Left cardiac atrium (tissue), 4 donors: ENCODE measurements at regions of chr4 and their contacts with region 1.

Region 1: DNA sequence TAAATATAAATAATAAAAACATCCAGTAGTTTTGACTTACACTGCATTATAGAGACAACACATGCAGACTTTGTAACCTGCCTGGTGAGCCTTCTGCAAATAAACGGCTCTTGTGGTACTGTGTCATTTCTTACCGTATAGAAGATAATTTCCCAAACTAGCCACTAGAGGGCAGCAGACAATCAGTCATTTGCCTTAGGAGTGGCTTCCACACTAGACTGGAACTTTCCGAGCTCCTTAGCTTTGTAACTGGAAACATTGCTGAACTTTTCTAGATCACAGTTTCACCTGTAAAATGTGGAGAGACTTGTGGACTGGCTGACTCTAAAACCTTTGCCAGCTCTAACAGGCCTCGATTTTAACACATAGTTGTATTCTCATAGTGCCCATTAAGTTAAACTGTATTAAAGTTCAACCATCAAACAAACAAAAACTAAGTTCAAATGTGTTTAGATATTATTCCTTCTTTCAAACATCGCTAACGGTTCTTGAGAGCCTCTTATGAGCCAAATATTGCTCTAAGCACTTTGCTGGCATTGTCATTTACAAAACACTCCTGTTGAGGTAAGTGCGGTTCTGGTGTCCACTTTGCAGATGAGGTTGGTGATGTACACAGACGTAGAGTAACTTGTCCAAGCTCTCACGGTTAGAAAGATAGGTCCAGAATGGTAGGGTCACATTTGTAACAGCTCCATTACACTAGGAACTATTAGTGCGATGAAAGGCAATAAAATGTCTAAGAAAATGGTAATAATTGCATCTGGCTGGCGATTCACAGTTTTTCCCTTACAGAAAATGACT is 345.5 kb downstream of the ANK2 start:
- DNase-seq: no peak
- ATAC-seq: peak; percentile 95

Region 2: DNA sequence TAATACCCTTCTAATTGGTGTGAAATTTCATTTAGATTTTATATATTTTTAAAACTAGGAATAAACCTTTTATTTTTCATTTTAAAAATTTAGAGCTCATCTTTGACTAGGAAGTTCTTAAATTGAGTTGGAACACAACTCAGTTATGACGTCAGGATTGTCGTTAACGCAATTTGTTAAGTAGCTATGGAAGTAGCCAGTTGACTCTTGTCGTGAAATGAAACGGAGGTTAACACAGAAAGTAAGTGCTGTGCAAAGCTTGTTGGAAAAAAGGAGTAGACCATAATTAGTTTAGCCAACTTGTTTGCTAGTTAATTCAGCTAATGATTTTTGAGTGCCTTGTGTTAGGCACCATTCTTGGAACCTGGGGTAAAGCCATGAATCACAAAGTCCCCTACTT is 739.7 kb before region 1 on chr4:
- intact Hi-C with region 1: no loop called
- DNase-seq: no peak
- ATAC-seq: no peak

Region 3: DNA sequence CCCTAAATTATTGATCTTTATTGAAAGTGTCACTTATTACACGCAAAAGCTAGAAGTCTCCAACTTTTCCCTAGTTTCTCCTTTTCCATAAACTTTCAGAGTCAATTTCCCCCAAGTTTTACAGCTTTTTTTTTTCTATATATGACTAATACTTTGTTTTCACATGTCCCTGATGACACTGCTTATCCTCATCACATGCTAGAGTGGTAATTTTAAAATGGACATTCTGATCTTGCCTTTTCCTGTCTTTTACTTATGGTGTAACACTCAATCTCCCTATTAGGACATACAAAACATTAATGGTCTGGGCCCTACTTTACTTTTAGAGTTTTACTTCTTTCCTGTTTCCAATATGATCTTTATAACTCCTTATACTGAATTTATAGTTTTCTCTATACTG is 232.8 kb before region 1 on chr4:
- intact Hi-C with region 1: no loop called
- DNase-seq: no peak
- ATAC-seq: peak in 1 of 2 donors; percentile 40

Region 4: GRCh38 chr4:113623274-113623894 is 228.5 kb after region 1 on chr4:
- intact Hi-C with region 1: no loop called
- DNase-seq: no peak
- ATAC-seq: no peak

Region 5: GRCh38 chr4:113761620-113762185 is 366.8 kb after region 1 on chr4 and contains the start of gene CAMK2D:
- intact Hi-C with region 1: loop called (anchors 5 to 10 kb)
- DNase-seq: peak; percentile 82
- ATAC-seq: peak; percentile 75 to 83
- total RNA-seq, gene CAMK2D: 133 to 136 TPM

Region 6: GRCh38 chr4:113766882-113767281 is 372.0 kb after region 1 on chr4:
- intact Hi-C with region 1: loop called (anchors 5 to 10 kb)
- DNase-seq: no peak
- ATAC-seq: no peak

Region 7: GRCh38 chr4:113881256-113881655 is 486.3 kb after region 1 on chr4:
- intact Hi-C with region 1: loop called in 1 of 2 experiments (anchors 10 kb)
- DNase-seq: no peak
- ATAC-seq: peak in 1 of 2 donors; percentile 76

Region 8: GRCh38 chr4:113901994-113902787 is 507.3 kb after region 1 on chr4:
- intact Hi-C with region 1: loop called in 1 of 2 experiments (anchors 10 kb)
- DNase-seq: no peak
- ATAC-seq: peak; percentile 22 to 63

Region 9: GRCh38 chr4:114386637-114387233 is 991.8 kb after region 1 on chr4:
- intact Hi-C with region 1: loop called in 1 of 2 experiments (anchors 10 kb)
- DNase-seq: no peak
- ATAC-seq: no peak